ENCODE measurements at regions of chr1 and their contacts with region 1.

Region 1: DNA sequence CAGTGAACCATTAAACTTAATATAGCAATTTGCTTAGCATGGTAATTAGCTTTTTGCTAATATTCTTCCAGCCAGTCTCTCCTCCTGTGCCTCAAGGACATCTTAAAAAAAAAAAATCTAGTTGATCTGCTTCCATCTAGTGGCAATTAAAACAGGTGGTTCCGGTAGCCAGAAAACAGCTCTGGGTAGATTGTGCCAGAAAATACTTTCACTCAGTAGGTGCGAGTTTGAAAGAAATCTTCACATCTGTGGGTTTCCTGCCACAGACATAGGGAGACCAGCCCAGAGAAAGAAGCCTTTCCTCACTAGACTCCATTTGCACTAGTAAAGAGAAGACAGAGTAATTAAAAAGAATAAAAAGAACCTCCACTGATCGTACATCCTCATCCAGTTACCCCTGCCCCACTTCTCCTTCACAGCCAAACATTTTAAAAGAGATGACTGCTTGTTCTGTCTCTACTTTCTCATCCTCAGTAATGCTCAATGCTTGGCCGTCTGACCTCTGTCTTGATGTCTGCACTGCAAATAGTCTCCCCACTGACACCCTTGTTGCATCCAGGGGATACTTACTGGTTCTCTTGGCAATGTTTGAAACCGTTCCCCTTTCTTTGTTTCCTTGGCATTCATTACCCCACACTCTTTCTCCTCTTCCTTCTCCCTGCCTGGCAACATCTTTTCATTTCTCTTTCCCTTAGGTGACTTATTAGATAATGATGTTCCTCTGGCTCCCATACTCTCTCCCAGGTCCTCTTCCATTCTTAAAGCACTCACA is 16.9 kb downstream of the SELL start:
- DNase-seq: peak in 10 of 14 experiments; percentile 13 to 90 (median 49)
- ATAC-seq: peak; percentile 59
- H3K4me3 ChIP-seq: peak overlapping the region; percentile 4
- H3K4me3 Mint-ChIP-seq: peak overlapping the region; percentile 68
- H3K27ac ChIP-seq: peak overlapping the region; percentile 55 to 64
- H3K27ac Mint-ChIP-seq: no peak overlapping the region
- H3K4me1 ChIP-seq: peaks cover 83% of the 10 kb centered on the region
- H3K4me1 Mint-ChIP-seq: peaks cover 73% of the 10 kb centered on the region
- H3K27me3 ChIP-seq: no peaks in the 10 kb centered on the region
- H3K27me3 Mint-ChIP-seq: no peaks in the 10 kb centered on the region
- CTCF ChIP-seq: peak; percentile 70

Region 2: GRCh38 chr1:169586395-169587255 is 107.9 kb before region 1 on chr1 and contains the start of gene F5:
- CTCF ChIA-PET with region 1: interaction called, 20 read pairs
- POLR2A ChIA-PET with region 1: interaction called, 32 read pairs
- intact Hi-C with region 1: loop called in 1 of 2 experiments (anchors 5 kb)
- DNase-seq: peak; percentile 65 to 88 (median 72)
- ATAC-seq: peak; percentile 99
- H3K4me3 ChIP-seq: peak within 1 kb of the TSS; percentile 64
- H3K4me3 Mint-ChIP-seq: peak within 1 kb of the TSS; percentile 91
- H3K27ac ChIP-seq: no peak within 1 kb of the TSS
- H3K27ac Mint-ChIP-seq: peak within 1 kb of the TSS; percentile 71
- H3K4me1 ChIP-seq: peaks cover 19% of the 10 kb centered on the region
- H3K4me1 Mint-ChIP-seq: peaks cover 53% of the 10 kb centered on the region
- H3K27me3 ChIP-seq: no peaks in the 10 kb centered on the region
- H3K27me3 Mint-ChIP-seq: no peaks in the 10 kb centered on the region
- CTCF ChIP-seq: peak; percentile 71
- total RNA-seq, gene F5: 5.4 to 6.2 TPM

Region 3: GRCh38 chr1:169601093-169601881 is 93.2 kb before region 1 on chr1:
- CTCF ChIA-PET with region 1: interaction called, 24 read pairs
- POLR2A ChIA-PET with region 1: interaction called, 286 read pairs
- intact Hi-C with region 1: loop called in 1 of 2 experiments (anchors 1 kb)
- DNase-seq: peak in 3 of 14 experiments; percentile 49 to 59 (median 57)
- ATAC-seq: no peak
- H3K4me3 ChIP-seq: no peak overlapping the region
- H3K4me3 Mint-ChIP-seq: peak overlapping the region; percentile 7
- H3K27ac ChIP-seq: peak overlapping the region in 1 of 2 donors; percentile 9
- H3K27ac Mint-ChIP-seq: peak overlapping the region; percentile 77
- H3K4me1 ChIP-seq: peaks cover 40% of the 10 kb centered on the region
- H3K4me1 Mint-ChIP-seq: peaks cover 55% of the 10 kb centered on the region
- H3K27me3 ChIP-seq: no peaks in the 10 kb centered on the region
- H3K27me3 Mint-ChIP-seq: no peaks in the 10 kb centered on the region
- CTCF ChIP-seq: peak; percentile 84

Region 4: DNA sequence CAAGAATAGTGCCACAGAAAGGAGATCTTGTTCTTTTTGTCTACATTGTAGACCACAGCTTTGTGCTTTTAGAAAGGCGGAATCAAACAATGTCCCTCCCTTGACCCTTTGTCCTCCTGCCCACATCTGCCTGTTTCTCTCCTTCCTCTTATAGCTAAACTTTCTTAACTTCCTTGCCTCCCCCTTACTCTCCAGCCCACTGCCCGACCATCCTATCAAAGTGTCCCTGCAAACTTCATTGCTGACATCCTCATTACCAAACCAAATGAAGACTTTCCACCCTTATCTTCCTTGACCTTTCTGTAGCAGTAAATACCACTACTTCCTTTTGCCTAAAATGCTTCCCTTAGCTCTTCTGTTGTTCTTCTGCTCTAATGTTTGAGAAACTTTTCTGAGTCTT is 69.6 kb before region 1 on chr1:
- CTCF ChIA-PET with region 1: no interaction called
- POLR2A ChIA-PET with region 1: interaction called, 14 read pairs
- intact Hi-C with region 1: no loop called
- DNase-seq: no peak
- ATAC-seq: no peak
- H3K4me3 ChIP-seq: no peak overlapping the region
- H3K4me3 Mint-ChIP-seq: peak overlapping the region; percentile 2
- H3K27ac ChIP-seq: no peak overlapping the region
- H3K27ac Mint-ChIP-seq: peak overlapping the region; percentile 64
- H3K4me1 ChIP-seq: peaks cover 41% of the 10 kb centered on the region
- H3K4me1 Mint-ChIP-seq: peaks cover 80% of the 10 kb centered on the region
- H3K27me3 ChIP-seq: no peaks in the 10 kb centered on the region
- H3K27me3 Mint-ChIP-seq: no peaks in the 10 kb centered on the region
- CTCF ChIP-seq: no peak

Region 5: DNA sequence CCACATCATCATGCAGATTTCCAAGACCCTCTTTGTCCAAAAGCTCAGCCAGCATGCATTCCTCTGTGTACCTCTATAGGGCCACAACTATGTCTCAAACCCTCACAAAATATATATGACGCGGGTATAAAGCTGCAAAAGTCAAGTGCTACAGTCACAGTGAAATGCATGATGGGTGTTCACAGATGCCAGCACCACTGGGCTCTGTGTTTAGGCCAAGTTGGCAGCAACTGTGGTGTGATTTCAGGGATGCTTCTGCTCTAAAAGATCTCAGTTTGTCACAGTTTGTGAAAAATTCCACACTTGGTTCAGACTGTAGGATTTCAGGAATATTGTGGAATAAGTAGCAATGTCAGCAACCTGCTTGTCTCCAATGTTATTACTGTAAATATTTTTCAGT is 40.6 kb before region 1 on chr1:
- CTCF ChIA-PET with region 1: no interaction called
- POLR2A ChIA-PET with region 1: interaction called, 29 read pairs
- intact Hi-C with region 1: loop called in 1 of 2 experiments (anchors 5 kb)
- DNase-seq: no peak
- ATAC-seq: no peak
- H3K4me3 ChIP-seq: no peak overlapping the region
- H3K4me3 Mint-ChIP-seq: no peak overlapping the region
- H3K27ac ChIP-seq: no peak overlapping the region
- H3K27ac Mint-ChIP-seq: no peak overlapping the region
- H3K4me1 ChIP-seq: peaks cover 16% of the 10 kb centered on the region
- H3K4me1 Mint-ChIP-seq: peaks cover 74% of the 10 kb centered on the region
- H3K27me3 ChIP-seq: no peaks in the 10 kb centered on the region
- H3K27me3 Mint-ChIP-seq: no peaks in the 10 kb centered on the region
- CTCF ChIP-seq: no peak

Region 6: GRCh38 chr1:169670836-169671235 is 23.7 kb before region 1 on chr1:
- CTCF ChIA-PET with region 1: interaction called, 3 read pairs
- POLR2A ChIA-PET with region 1: interaction called, 150 read pairs
- intact Hi-C with region 1: no loop called
- DNase-seq: peak in 1 of 14 experiments; percentile 20
- ATAC-seq: no peak
- H3K4me3 ChIP-seq: no peak overlapping the region
- H3K4me3 Mint-ChIP-seq: peak overlapping the region; percentile 50
- H3K27ac ChIP-seq: no peak overlapping the region
- H3K27ac Mint-ChIP-seq: peak overlapping the region; percentile 82
- H3K4me1 ChIP-seq: peaks cover 25% of the 10 kb centered on the region
- H3K4me1 Mint-ChIP-seq: peaks cover 67% of the 10 kb centered on the region
- H3K27me3 ChIP-seq: no peaks in the 10 kb centered on the region
- H3K27me3 Mint-ChIP-seq: no peaks in the 10 kb centered on the region
- CTCF ChIP-seq: no peak

Region 7: DNA sequence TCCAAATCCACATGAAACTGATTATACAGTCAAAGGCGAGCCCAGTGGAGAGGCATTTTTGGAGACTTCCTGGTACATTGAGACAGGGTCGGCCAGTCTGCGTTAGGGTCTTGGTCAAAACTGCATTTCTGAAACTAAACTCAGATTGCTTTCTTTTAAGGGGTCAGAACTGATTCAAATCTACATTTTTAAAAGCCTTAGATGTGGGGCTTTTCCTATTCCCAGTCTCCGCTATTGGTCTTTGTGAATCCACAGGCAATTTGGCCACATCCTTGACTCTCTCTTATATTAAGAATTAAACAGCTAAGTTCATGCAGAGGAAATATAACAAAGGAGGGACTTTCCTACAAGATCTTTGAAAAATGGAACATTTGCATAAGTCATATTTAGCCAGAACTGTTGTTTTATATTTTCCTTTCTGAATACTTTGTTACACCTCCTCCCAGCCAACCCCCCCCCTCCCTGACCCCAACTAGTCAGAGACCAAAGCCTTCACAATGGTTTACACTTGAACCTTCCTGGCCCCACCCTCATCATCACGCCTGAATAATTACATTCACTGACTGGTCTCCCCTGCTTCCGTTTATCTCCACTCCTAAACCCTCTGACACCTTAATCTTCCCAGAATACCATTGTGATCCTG is 14.0 kb before region 1 on chr1:
- CTCF ChIA-PET with region 1: interaction called, 13 read pairs
- POLR2A ChIA-PET with region 1: interaction called, 150 read pairs
- intact Hi-C with region 1: no loop called
- DNase-seq: peak in 5 of 14 experiments; percentile 15 to 54 (median 34)
- ATAC-seq: peak; percentile 48
- H3K4me3 ChIP-seq: no peak overlapping the region
- H3K4me3 Mint-ChIP-seq: peak overlapping the region; percentile 61
- H3K27ac ChIP-seq: no peak overlapping the region
- H3K27ac Mint-ChIP-seq: peak overlapping the region; percentile 72
- H3K4me1 ChIP-seq: peaks cover 58% of the 10 kb centered on the region
- H3K4me1 Mint-ChIP-seq: peaks cover 61% of the 10 kb centered on the region
- H3K27me3 ChIP-seq: no peaks in the 10 kb centered on the region
- H3K27me3 Mint-ChIP-seq: no peaks in the 10 kb centered on the region
- CTCF ChIP-seq: no peak